ENCODE measurements at regions of chr1 and their contacts with region 1.

Region 1: GRCh38 chr1:235187316-235187715 is 26.3 kb upstream of the RBM34 start:
- DNase-seq: no peak
- ATAC-seq: no peak
- H3K4me3 Mint-ChIP-seq: no peak overlapping the region
- H3K27ac Mint-ChIP-seq: no peak overlapping the region
- H3K4me1 Mint-ChIP-seq: peaks cover 14% of the 10 kb centered on the region
- H3K27me3 Mint-ChIP-seq: no peaks in the 10 kb centered on the region

Region 2: DNA sequence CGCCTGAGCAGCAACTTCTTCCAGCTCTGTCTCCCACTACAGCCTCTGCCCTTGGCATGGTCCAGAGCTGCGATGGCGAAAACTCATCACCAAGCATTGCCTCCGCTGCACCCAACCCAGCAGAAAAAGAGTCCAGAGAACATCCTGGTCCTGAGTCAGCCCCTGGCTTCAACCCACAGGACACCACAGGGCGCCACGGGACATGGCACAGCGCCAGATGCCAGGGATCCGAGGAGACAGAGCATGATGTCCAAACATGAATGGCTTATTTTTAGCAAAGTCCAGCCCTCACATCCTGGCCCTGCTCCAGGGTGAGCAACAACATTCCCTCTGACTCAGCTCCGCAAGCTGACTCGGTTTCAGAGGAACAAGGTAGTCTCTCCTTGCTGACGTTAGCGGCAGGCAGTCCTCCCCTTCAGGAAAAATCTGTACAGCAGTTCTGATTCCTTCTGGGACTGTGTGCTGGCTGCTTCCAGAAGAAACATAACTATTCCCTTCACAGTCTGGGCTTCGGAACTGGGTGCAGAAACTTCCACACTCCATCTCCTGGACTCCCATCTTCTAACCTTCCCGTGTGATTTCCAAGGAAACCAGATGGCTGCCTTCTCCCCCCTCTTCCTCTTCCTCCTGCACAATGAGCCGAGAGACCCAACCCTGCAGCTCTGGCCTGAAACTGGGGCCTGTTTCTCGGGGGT is 190.0 kb before region 1 on chr1:
- CTCF ChIA-PET with region 1: no interaction called
- POLR2A ChIA-PET with region 1: no interaction called
- intact Hi-C with region 1: no loop called
- DNase-seq: no peak
- ATAC-seq: no peak
- H3K4me3 Mint-ChIP-seq: no peak overlapping the region
- H3K27ac Mint-ChIP-seq: no peak overlapping the region
- H3K4me1 Mint-ChIP-seq: peaks cover 7% of the 10 kb centered on the region
- H3K27me3 Mint-ChIP-seq: no peaks in the 10 kb centered on the region

Region 3: GRCh38 chr1:235199441-235199840 is 12.1 kb after region 1 on chr1:
- CTCF ChIA-PET with region 1: interaction called, 3 read pairs
- POLR2A ChIA-PET with region 1: no interaction called
- intact Hi-C with region 1: loop called in 1 of 2 experiments (anchors 1 kb)
- DNase-seq: no peak
- ATAC-seq: no peak
- H3K4me3 Mint-ChIP-seq: no peak overlapping the region
- H3K27ac Mint-ChIP-seq: no peak overlapping the region
- H3K4me1 Mint-ChIP-seq: no peaks in the 10 kb centered on the region
- H3K27me3 Mint-ChIP-seq: no peaks in the 10 kb centered on the region

Region 4: DNA sequence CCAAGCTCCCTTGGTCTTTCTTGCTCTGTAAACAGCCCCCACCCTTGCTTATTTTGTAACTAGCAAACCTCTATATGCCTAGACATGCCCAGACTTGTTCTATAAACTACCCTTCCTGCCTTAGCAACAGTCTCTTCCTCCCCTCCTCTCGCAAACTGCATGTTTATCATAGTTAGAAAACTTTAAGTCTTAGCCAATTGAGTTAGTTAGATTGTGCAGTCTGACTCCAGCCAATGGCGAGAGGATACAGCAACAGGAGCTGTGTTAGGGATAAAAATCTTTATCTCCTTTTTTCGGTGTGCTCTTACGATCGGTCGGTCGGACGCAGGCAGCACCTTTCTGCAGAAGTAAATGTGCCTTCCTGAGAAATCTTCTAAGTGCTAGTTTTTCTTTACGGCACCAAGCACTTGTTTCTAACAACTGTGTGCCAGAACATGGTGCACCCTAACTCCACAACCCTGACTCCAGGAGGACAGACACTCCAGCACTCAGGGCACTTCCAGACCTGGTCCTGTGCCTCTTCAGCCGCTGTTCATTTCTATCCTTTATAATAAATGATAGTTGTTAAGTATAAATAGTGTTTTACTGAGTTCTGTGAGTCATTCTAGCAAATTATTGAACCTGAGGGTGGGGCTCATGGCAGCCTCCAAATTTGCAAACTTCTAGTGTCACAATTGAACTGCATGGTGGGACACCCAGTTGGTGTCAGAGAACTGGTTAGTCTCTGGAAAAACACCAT is 488.0 kb after region 1 on chr1:
- CTCF ChIA-PET with region 1: no interaction called
- POLR2A ChIA-PET with region 1: no interaction called
- intact Hi-C with region 1: no loop called
- DNase-seq: no peak
- ATAC-seq: no peak
- H3K4me3 Mint-ChIP-seq: no peak overlapping the region
- H3K27ac Mint-ChIP-seq: no peak overlapping the region
- H3K4me1 Mint-ChIP-seq: no peaks in the 10 kb centered on the region
- H3K27me3 Mint-ChIP-seq: no peaks in the 10 kb centered on the region

Measured in activated CD4-positive, alpha-beta T cell treated with anti-CD3 and anti-CD28 coated beads for 36 hours (primary cell).